Activated naive CD8-positive, alpha-beta T cell treated with anti-CD3 and anti-CD28 coated beads, Interleukin-2, amount 10 ng/mL, durations not matched to agents 7 days and 5 days (primary cell): ENCODE measurements at regions of chr11 and their contacts with region 1.

Region 1: DNA sequence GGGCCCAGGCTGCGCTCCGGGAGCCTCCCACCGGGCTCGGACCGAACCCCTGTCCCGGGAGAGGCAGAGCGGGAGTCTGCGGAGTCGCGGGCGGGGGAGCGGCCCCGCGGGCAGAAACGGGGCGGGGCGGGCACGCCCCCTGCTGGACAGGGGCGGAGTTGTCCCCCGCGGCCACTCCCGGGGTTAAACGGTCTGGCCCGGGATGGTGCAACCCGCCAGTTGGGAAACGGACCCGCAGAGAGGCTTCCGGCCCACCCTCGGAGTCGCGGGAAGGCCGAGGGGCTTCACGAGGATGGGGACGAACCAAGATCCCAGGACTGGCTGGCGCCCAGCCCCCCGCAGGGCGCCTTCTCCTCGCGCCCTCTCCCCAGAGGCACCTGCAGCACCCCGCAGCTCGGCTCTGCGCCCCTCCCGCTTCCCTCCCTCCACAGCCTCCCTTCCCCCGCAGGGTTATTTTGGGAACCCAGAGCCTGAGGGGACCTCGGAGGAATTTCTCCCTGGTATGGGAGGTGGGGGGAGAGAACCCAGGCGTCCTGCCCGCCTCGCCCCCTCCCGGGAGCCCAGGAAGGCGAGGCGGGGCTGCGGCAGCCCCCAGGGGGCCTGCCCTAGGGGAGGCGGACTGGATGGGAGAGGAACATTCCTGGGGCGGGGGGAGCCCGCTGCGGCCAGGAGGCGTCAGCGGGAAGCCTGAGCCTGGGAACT is 902 bp downstream of the RASGRP2 start:
- DNase-seq: peak; percentile 91
- ATAC-seq: peak; percentile 7
- H3K4me3 Mint-ChIP-seq: peak overlapping the region; percentile 79
- H3K27ac Mint-ChIP-seq: no peak overlapping the region
- H3K4me1 Mint-ChIP-seq: peaks cover 27% of the 10 kb centered on the region
- H3K27me3 Mint-ChIP-seq: no peaks in the 10 kb centered on the region

Region 2: GRCh38 chr11:64688534-64688982 is 54.5 kb before region 1 on chr11:
- POLR2A ChIA-PET with region 1: interaction called, 12 read pairs
- DNase-seq: peak; percentile 93
- ATAC-seq: peak; percentile 95
- H3K4me3 Mint-ChIP-seq: peak overlapping the region; percentile 34
- H3K27ac Mint-ChIP-seq: no peak overlapping the region
- H3K4me1 Mint-ChIP-seq: peaks cover 15% of the 10 kb centered on the region
- H3K27me3 Mint-ChIP-seq: peaks cover 26% of the 10 kb centered on the region

Region 3: GRCh38 chr11:64713031-64713780 is 29.8 kb before region 1 on chr11:
- POLR2A ChIA-PET with region 1: no interaction called
- DNase-seq: no peak
- ATAC-seq: peak; percentile 41
- H3K4me3 Mint-ChIP-seq: no peak overlapping the region
- H3K27ac Mint-ChIP-seq: no peak overlapping the region
- H3K4me1 Mint-ChIP-seq: peaks cover 15% of the 10 kb centered on the region
- H3K27me3 Mint-ChIP-seq: peaks cover 72% of the 10 kb centered on the region

Region 4: DNA sequence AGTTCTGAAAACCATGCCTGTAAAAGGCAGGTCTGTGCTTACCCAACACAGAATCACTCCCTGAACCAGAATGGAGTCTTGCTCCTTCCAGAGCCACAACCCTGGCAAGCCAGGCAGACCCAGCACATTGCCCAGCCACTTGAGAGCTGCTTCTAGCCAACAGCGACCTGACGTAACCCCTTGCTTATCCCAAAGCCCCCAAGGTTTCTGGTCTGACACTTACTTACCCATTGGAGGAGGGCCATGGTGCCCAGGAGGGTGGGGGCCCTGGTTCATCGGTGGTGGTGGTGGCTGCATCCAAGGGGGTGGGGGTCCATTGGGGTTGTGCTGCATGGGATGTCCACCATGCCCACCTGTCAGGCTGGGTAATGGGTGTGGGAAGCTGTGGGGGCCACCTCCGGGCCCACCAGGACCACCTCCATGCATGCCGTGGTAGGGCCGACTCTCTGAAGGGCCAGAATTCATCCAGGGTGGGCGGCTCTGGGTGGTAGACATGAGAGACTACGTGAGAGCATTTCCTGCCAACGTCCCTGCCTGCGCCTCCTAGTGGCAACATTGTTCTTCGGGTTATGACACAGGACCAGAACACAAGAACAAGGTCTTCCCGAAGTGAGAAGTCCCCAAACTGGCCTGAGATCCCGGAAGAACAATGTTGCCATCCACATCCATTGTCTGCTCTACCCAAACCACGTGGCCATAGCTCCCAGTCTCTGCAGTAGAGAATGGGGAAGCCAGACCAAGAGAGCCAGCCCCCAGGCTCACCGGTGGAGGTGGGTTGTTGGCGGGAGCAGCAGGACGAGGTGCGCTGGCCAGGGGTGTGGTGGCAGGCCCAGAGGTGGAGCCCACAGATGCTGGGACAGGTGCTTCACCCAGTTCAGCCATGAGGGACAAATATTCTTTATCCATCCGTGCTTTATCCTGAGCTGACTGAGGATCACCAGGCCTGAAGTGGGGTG is 24.6 kb after region 1 on chr11:
- POLR2A ChIA-PET with region 1: interaction called, 278 read pairs
- DNase-seq: peak; percentile 81
- ATAC-seq: peak; percentile 30
- H3K4me3 Mint-ChIP-seq: peak overlapping the region; percentile 39
- H3K27ac Mint-ChIP-seq: peak overlapping the region; percentile 70
- H3K4me1 Mint-ChIP-seq: peaks cover 67% of the 10 kb centered on the region
- H3K27me3 Mint-ChIP-seq: no peaks in the 10 kb centered on the region

Region 5: GRCh38 chr11:64778508-64779346 is 35.7 kb after region 1 on chr11 and contains the start of gene SF1:
- POLR2A ChIA-PET with region 1: interaction called, 52 read pairs
- DNase-seq: peak; percentile 95
- ATAC-seq: peak; percentile 89
- H3K4me3 Mint-ChIP-seq: peak within 1 kb of the TSS; percentile 88
- H3K27ac Mint-ChIP-seq: peak within 1 kb of the TSS; percentile 97
- H3K4me1 Mint-ChIP-seq: peaks cover 47% of the 10 kb centered on the region
- H3K27me3 Mint-ChIP-seq: no peaks in the 10 kb centered on the region
- total RNA-seq, gene SF1: 519 to 524 TPM

Region 6: GRCh38 chr11:64793271-64794172 is 50.5 kb after region 1 on chr11:
- POLR2A ChIA-PET with region 1: interaction called, 10 read pairs
- DNase-seq: no peak
- ATAC-seq: peak; percentile 62
- H3K4me3 Mint-ChIP-seq: peak overlapping the region; percentile 35
- H3K27ac Mint-ChIP-seq: peak overlapping the region; percentile 96
- H3K4me1 Mint-ChIP-seq: peaks cover 30% of the 10 kb centered on the region
- H3K27me3 Mint-ChIP-seq: no peaks in the 10 kb centered on the region

Region 7: GRCh38 chr11:64803163-64803845 is 60.3 kb after region 1 on chr11 and contains the start of gene MAP4K2:
- POLR2A ChIA-PET with region 1: interaction called, 14 read pairs
- DNase-seq: peak; percentile 96
- ATAC-seq: peak; percentile 85
- H3K4me3 Mint-ChIP-seq: peak within 1 kb of the TSS; percentile 86
- H3K27ac Mint-ChIP-seq: peak within 1 kb of the TSS; percentile 82
- H3K4me1 Mint-ChIP-seq: peaks cover 25% of the 10 kb centered on the region
- H3K27me3 Mint-ChIP-seq: no peaks in the 10 kb centered on the region
- total RNA-seq, gene MAP4K2: 92.0 to 96.2 TPM